Activated naive CD8-positive, alpha-beta T cell treated with anti-CD3 and anti-CD28 coated beads, Interleukin-2, amount 10 ng/mL, durations not matched to agents 7 days and 5 days (primary cell): ENCODE measurements at regions of chr3 and their contacts with region 1.

Region 1: GRCh38 chr3:42600111-42600988 is at the start of gene NKTR:
- DNase-seq: peak; percentile 100
- ATAC-seq: peak; percentile 90
- H3K4me3 Mint-ChIP-seq: peak within 1 kb of the TSS; percentile 97
- H3K27ac Mint-ChIP-seq: peak within 1 kb of the TSS; percentile 99
- H3K4me1 Mint-ChIP-seq: peaks cover 30% of the 10 kb centered on the region
- H3K27me3 Mint-ChIP-seq: no peaks in the 10 kb centered on the region
- total RNA-seq, gene NKTR: 150 to 152 TPM

Region 2: DNA sequence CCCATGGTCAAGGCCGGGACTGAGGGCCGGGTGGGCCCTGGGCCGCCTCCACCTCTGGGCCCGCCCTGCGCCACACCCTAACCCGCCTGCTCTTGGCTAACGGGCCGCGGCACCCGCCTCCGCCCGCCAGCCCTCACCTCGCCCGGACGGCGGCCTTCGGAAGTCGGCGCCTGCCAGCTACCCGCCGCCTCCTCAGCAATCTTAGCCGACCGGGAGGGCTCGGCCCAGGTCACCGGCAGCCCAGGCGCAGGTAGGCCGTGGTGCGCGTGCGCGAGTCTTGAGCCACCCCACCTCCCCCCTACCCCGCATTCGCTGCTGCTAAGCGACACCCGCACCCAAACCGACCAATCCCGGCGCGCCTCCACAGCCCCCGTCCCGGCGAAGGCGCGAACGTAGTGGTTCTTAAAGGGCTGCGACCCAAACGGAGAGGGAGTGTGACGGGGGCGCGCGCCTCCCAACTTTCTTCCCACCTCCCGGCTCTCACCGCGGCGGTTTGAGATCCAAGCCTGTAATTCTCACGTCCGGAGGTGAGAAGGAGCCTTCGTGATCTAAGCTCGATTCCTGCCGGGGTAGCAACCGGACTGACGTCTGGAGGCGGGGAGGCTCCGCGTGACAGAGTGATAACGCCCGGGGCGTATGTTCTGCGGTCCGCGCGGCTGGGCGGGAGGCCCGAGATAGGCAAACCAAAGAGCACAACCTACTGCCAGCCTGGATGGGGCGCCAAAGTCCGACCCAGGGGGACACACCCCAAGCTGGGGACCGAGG is 18.5 kb before region 1 on chr3 and contains the start of gene SEC22C:
- POLR2A ChIA-PET with region 1: interaction called, 42 read pairs
- DNase-seq: peak; percentile 95
- ATAC-seq: peak; percentile 93
- H3K4me3 Mint-ChIP-seq: peak within 1 kb of the TSS; percentile 90
- H3K27ac Mint-ChIP-seq: peak within 1 kb of the TSS; percentile 95
- H3K4me1 Mint-ChIP-seq: peaks cover 50% of the 10 kb centered on the region
- H3K27me3 Mint-ChIP-seq: no peaks in the 10 kb centered on the region
- total RNA-seq, gene SEC22C: 52.5 to 53.0 TPM

Region 3: GRCh38 chr3:42610976-42611375 is 10.6 kb after region 1 on chr3:
- POLR2A ChIA-PET with region 1: interaction called, 10 read pairs
- DNase-seq: no peak
- ATAC-seq: peak; percentile 63
- H3K4me3 Mint-ChIP-seq: no peak overlapping the region
- H3K27ac Mint-ChIP-seq: peak overlapping the region; percentile 23
- H3K4me1 Mint-ChIP-seq: peaks cover 42% of the 10 kb centered on the region
- H3K27me3 Mint-ChIP-seq: no peaks in the 10 kb centered on the region